Activated T-helper 2 cell treated with anti-CD3 and anti-CD28 coated beads, Interferon-gamma antibody, Interleukin-2, Interleukin-4, amounts not matched to agents 10 μg/mL and 5 μg/mL and 100 μg/mL, durations not matched to agents 14 hours and 24 hours and 36 hours (primary cell): ENCODE measurements at regions of chr16 and their contacts with region 1.

Region 1: GRCh38 chr16:47141773-47142485 is 1.8 kb downstream of the NETO2 start:
- DNase-seq: peak; percentile 75
- H3K4me3 Mint-ChIP-seq: peak overlapping the region; percentile 79
- H3K27ac Mint-ChIP-seq: no peak overlapping the region
- H3K4me1 Mint-ChIP-seq: peaks cover 18% of the 10 kb centered on the region
- H3K27me3 Mint-ChIP-seq: peaks cover 30% of the 10 kb centered on the region

Region 2: GRCh38 chr16:47037746-47038458 is 104.0 kb before region 1 on chr16:
- intact Hi-C with region 1: loop called (anchors 1 kb)
- DNase-seq: peak; percentile 82
- H3K4me3 Mint-ChIP-seq: peak overlapping the region; percentile 47
- H3K27ac Mint-ChIP-seq: no peak overlapping the region
- H3K4me1 Mint-ChIP-seq: peaks cover 4% of the 10 kb centered on the region
- H3K27me3 Mint-ChIP-seq: peaks cover 34% of the 10 kb centered on the region

Region 3: DNA sequence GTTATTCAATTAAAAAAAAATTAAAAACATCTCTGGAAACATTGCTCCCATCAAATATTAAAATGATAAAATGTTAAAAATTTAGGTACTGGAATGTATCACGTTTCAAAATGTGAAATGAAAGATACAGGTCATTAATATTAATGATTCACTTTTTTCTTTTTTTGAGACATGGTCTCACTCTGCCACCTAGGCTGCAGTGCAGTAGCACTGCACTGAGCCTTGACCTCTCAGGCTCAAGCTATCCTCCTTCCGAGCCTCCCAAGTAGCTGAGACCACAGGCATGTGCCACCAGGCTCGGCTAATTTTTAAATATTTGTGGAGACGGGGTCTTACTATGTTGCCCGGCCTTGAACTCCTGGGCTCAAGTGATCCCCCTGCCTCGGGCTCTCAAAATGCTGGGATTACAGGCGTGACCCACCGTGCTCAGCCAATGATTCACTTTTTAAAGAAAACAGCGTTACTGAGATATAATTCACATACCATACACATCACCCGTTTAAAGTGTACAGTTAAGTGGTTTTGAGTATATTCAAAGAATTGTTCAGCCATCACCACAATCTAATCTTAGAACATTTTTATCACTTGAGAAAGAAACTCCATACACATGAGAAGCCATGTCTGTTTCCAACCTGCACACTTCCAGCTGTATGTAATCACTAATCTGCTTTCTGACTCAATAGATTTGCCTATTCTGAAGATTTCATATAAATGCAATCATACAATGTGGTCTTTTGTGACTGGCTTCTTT is 20.9 kb after region 1 on chr16:
- intact Hi-C with region 1: no loop called
- DNase-seq: no peak
- H3K4me3 Mint-ChIP-seq: no peak overlapping the region
- H3K27ac Mint-ChIP-seq: no peak overlapping the region
- H3K4me1 Mint-ChIP-seq: no peaks in the 10 kb centered on the region
- H3K27me3 Mint-ChIP-seq: no peaks in the 10 kb centered on the region

Region 4: DNA sequence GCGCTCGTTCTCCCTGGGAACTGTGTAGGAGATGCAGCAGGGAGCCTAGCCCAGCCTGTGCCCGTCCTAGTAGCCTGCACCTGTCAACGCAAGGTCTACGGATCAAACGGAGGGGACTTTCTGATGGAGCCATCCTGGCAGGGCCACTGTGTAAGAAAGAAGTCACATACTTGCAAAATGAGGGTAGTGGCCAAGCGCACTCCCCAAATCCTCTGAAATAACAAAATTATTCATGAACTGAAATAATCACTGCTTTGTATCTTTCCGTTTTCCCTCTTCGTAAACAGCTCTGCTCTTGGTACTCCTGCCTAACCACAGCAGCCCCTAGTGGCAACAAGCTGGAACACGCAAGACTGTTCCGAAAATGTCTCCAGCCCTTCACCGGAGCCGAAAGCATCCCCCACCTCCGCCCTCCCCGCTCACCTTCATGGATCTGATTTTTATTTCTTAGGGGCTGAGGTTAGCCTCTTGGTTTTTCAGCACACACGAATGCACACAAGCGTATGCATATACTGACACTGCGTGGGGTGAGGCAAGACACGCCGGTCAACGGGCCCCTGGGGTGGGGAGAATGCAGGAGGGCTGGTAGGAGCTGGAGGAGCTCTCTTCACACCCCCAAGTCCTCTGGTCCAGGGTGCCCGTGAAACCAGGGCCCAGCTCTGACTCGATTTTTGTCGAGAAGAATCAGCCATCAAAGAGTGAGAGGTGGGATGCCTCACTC is 913.1 kb after region 1 on chr16:
- intact Hi-C with region 1: loop called (anchors 2 kb)
- DNase-seq: no peak
- H3K4me3 Mint-ChIP-seq: no peak overlapping the region
- H3K27ac Mint-ChIP-seq: no peak overlapping the region
- H3K4me1 Mint-ChIP-seq: peaks cover 2% of the 10 kb centered on the region
- H3K27me3 Mint-ChIP-seq: peaks cover 18% of the 10 kb centered on the region

Region 5: GRCh38 chr16:48156790-48157209 is 1014.9 kb after region 1 on chr16:
- intact Hi-C with region 1: loop called (anchors 1 kb)
- DNase-seq: peak; percentile 60
- H3K4me3 Mint-ChIP-seq: no peak overlapping the region
- H3K27ac Mint-ChIP-seq: no peak overlapping the region
- H3K4me1 Mint-ChIP-seq: peaks cover 25% of the 10 kb centered on the region
- H3K27me3 Mint-ChIP-seq: peaks cover 38% of the 10 kb centered on the region